Endothelial cell of umbilical vein (primary cell): ENCODE measurements at regions of chr2 and their contacts with region 1.

Region 1: GRCh38 chr2:205925373-205926337 is 160.3 kb downstream of the INO80D start:
- DNase-seq: peak; percentile 79
- H3K4me3 ChIP-seq: peak overlapping the region in 1 of 3 experiments; percentile 47
- H3K27ac ChIP-seq: no peak overlapping the region
- H3K4me1 ChIP-seq: peaks cover 17% of the 10 kb centered on the region
- H3K27me3 ChIP-seq: peaks cover 5 to 6% of the 10 kb centered on the region in 2 experiments
- CTCF ChIP-seq: peak; percentile 92 to 96
- POLR2A ChIP-seq: no peak

Region 2: GRCh38 chr2:204145263-204145751 is 1780.3 kb before region 1 on chr2:
- CTCF ChIA-PET with region 1: interaction called, 12 read pairs
- POLR2A ChIA-PET with region 1: no interaction called
- dilution Hi-C with region 1: no loop called
- intact Hi-C with region 1: no loop called
- DNase-seq: peak; percentile 78
- H3K4me3 ChIP-seq: peak overlapping the region in 2 of 3 experiments; percentile 20 to 46
- H3K27ac ChIP-seq: no peak overlapping the region
- H3K4me1 ChIP-seq: peaks cover 4% of the 10 kb centered on the region
- H3K27me3 ChIP-seq: peaks cover 0 to 6% of the 10 kb centered on the region in 2 experiments
- CTCF ChIP-seq: peak; percentile 89 to 91
- POLR2A ChIP-seq: no peak

Region 3: GRCh38 chr2:204538182-204539018 is 1387.3 kb before region 1 on chr2:
- CTCF ChIA-PET with region 1: no interaction called
- POLR2A ChIA-PET with region 1: no interaction called
- dilution Hi-C with region 1: no loop called
- intact Hi-C with region 1: loop called (anchors 5 kb)
- DNase-seq: peak; percentile 93
- H3K4me3 ChIP-seq: peak overlapping the region in 2 of 3 experiments; percentile 6 to 51
- H3K27ac ChIP-seq: peak overlapping the region; percentile 81
- H3K4me1 ChIP-seq: peaks cover 32% of the 10 kb centered on the region
- H3K27me3 ChIP-seq: no peaks in the 10 kb centered on the region
- CTCF ChIP-seq: no peak
- POLR2A ChIP-seq: no peak

Region 4: GRCh38 chr2:205766779-205767359 is 158.8 kb before region 1 on chr2:
- CTCF ChIA-PET with region 1: interaction called, 6 read pairs
- POLR2A ChIA-PET with region 1: no interaction called
- dilution Hi-C with region 1: no loop called
- intact Hi-C with region 1: loop called (anchors 1 kb)
- DNase-seq: peak; percentile 66
- H3K4me3 ChIP-seq: no peak overlapping the region
- H3K27ac ChIP-seq: no peak overlapping the region
- H3K4me1 ChIP-seq: peaks cover 28% of the 10 kb centered on the region
- H3K27me3 ChIP-seq: no peaks in the 10 kb centered on the region
- CTCF ChIP-seq: peak; percentile 79 to 86
- POLR2A ChIP-seq: no peak

Region 5: DNA sequence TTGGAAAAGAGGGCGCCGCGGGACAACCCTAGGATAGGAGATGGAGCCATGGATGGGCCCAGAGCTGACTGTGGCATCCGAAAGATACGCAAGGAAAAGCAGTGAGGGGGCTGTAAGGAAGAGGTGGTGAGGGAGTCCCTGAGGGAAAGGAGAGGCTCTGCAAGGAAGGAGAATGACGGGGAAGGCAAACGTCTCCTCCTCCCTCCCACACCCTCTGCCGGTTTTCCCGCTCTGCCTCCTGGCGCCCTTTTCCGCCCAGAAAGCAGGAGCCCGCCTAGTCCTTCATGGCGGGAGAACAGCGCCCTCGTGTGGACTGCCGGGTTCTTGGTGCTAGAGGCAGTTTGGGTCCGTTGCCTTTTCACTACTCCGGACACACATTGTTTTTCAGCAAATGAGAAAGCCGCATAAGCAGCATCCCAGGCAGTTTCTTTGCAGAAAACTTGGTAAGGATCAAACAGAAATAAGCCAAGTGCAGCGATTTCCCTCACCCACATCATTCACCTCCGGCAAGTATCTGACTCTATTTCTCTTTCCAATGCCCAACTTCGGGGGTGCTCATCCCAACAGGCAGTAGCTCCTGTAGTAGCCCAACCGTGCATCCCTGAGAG is 40.1 kb before region 1 on chr2:
- CTCF ChIA-PET with region 1: interaction called, 17 read pairs
- POLR2A ChIA-PET with region 1: no interaction called
- dilution Hi-C with region 1: no loop called
- intact Hi-C with region 1: loop called (anchors 1 kb)
- DNase-seq: peak; percentile 76
- H3K4me3 ChIP-seq: no peak overlapping the region
- H3K27ac ChIP-seq: no peak overlapping the region
- H3K4me1 ChIP-seq: peaks cover 5% of the 10 kb centered on the region
- H3K27me3 ChIP-seq: peaks cover 0 to 2% of the 10 kb centered on the region in 2 experiments
- CTCF ChIP-seq: peak; percentile 90 to 93
- POLR2A ChIP-seq: no peak

Region 6: GRCh38 chr2:205915130-205915524 is 10.5 kb before region 1 on chr2:
- CTCF ChIA-PET with region 1: interaction called, 20 read pairs
- POLR2A ChIA-PET with region 1: no interaction called
- dilution Hi-C with region 1: no loop called
- intact Hi-C with region 1: no loop called
- DNase-seq: no peak
- H3K4me3 ChIP-seq: no peak overlapping the region
- H3K27ac ChIP-seq: no peak overlapping the region
- H3K4me1 ChIP-seq: no peaks in the 10 kb centered on the region
- H3K27me3 ChIP-seq: peaks cover 20 to 21% of the 10 kb centered on the region in 2 experiments
- CTCF ChIP-seq: no peak
- POLR2A ChIP-seq: no peak

Region 7: DNA sequence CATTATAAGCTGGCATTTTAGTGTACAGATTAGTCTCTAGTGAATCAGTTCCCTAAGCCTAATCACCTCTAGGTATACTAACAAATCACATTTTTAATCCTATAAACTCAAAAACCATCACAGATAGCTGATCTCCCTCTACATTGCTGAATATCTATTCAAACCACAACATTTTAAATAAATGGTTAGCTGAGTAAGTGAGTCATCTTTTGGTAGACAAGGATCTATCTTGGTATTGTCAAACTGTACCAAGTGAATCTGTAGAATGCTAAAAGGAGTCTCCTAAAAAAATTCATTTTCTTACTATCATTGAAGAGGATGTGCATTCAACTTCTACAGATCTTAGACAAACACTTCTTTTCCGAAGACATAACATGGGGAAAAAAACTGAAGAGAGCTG is 119.6 kb after region 1 on chr2:
- CTCF ChIA-PET with region 1: no interaction called
- POLR2A ChIA-PET with region 1: no interaction called
- dilution Hi-C with region 1: no loop called
- intact Hi-C with region 1: no loop called
- DNase-seq: no peak
- H3K4me3 ChIP-seq: no peak overlapping the region
- H3K27ac ChIP-seq: no peak overlapping the region
- H3K4me1 ChIP-seq: no peaks in the 10 kb centered on the region
- H3K27me3 ChIP-seq: no peaks in the 10 kb centered on the region
- CTCF ChIP-seq: no peak
- POLR2A ChIP-seq: no peak